ENCODE measurements at regions of chr19 and their contacts with region 1.

Region 1: DNA sequence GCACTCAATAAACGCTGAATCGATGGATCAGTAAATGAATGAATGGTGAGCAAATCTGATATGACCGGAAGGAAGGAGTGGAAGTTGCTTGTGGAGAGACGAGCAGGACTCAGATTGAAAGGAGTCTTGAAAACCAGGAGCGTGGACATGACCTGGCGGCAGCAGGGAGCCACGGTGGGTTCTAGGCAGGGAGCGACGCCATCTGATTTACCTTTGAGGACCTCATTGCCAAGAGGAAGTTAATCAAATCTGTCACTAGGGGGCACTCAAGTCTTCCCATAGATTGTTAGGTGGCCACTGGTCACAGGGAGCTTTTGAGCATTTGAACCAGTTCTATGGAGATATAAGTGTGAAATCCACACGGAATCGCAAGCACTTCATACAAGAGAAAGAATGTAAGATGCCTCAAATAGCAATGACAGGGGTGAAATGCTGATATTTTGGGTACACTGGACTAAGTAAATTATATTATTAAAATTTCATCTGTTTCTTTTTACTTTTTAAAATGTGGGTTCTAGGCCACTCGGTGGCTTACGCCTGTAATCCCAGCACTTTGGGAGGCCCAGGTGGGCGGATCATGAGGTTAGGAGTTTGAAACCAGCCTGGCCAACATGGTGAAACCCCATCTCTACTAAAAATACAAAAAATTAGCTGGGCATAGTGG is 9.2 kb upstream of the FBN3 start:
- DNase-seq: no peak

Region 2: GRCh38 chr19:7943444-7944176 is 214.9 kb before region 1 on chr19 and contains the start of gene TIMM44:
- intact Hi-C with region 1: loop called (anchors 10 kb)
- DNase-seq: peak; percentile 100
- total RNA-seq, gene TIMM44: 82.6 TPM

Region 3: GRCh38 chr19:7970716-7971448 is 187.7 kb before region 1 on chr19:
- intact Hi-C with region 1: loop called (anchors 10 kb)
- DNase-seq: no peak

Region 4: DNA sequence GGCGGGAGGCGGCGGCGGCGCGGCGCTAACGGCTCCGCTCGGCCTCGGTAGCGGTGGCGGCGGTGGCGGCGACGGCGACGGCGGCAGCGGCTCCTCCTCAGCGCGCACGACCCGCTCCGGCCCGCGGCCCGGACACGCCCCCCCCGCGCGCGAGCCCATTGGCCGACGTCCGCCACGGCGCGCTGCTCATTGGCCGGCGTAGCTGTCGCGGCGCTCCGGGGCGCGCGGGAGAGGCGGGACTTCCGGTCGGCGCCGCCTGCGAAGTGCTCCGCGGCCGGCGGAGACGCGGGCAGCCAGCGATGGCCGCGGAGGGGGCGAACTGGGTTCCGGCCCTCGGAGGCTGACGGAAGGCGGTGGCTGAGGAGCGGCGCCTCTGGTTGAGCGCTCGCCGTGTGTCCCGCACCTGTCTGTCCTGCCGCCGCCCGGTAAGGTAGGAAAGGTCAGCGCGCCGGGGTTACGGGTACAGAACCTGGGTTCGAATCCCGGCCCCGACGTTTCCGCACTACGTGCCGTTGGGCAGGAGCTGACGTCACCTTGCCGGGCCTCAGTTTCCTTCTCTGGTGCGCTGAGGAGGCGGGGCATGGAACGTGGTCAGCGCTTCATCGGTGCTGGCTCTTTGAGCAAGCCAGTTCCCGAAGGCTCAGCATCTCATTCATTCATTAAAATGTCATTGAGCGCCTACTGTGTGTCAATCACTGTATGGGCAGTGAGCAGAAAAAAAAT is 152.8 kb before region 1 on chr19 and contains the start of gene ELAVL1:
- intact Hi-C with region 1: loop called (anchors 10 kb)
- DNase-seq: peak; percentile 91
- total RNA-seq, gene ELAVL1: 55.2 TPM

Region 5: DNA sequence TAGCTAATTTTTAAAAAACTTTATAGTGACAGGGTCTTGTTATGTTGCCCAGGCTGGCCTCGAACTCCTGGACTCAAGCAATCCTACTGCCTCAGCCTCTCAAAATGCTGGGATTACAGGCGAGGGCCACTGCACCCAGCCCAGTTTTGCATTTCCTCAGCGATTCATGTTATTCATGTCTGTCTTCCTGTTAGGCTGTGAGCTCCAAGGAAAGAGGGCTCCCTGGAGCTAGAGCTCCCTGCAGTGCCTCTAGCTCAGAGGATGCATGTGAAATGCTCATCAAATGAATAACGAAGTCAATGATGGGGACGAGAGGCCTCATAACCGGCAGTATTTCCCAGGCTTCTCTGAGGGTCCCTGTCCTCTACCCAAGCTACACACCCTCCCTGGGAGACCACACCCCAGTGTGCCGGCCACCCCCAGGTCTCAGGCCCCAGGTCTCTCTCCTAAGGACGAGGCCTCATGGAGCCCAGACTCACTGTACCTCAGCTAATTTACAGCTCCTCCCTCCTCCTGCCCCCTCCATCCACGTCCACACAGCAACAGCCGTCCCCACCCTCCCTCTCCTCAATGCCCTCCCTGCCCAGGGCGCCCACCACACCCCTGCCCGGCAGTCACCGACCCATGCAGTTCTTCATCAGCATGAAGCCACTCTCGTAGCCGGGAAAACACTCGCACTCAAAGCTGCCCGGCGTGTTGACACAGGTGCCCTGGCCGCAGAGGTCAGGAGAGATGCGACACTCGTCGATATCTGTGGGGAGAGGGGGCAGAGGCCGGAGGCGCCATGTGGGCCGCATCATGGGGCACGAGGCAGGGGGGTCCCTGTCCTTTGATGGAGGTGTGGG is 37.7 kb before region 1 on chr19:
- intact Hi-C with region 1: no loop called
- DNase-seq: no peak

Measured in cardiac septum (tissue), 1 donor.